Caco-2 (cell line): ENCODE measurements at regions of chr17 and their contacts with region 1.

Region 1: GRCh38 chr17:28227316-28228125 is 91.5 kb upstream of the TMEM97 start:
- DNase-seq: peak; percentile 100
- H3K4me3 ChIP-seq: peak overlapping the region; percentile 88
- H3K4me3 Mint-ChIP-seq: peak overlapping the region; percentile 91
- H3K27ac Mint-ChIP-seq: peak overlapping the region; percentile 95
- H3K4me1 ChIP-seq: peaks cover 32% of the 10 kb centered on the region
- H3K4me1 Mint-ChIP-seq: peaks cover 24% of the 10 kb centered on the region
- H3K27me3 ChIP-seq: no peaks in the 10 kb centered on the region
- H3K27me3 Mint-ChIP-seq: no peaks in the 10 kb centered on the region
- CTCF ChIP-seq: peak; percentile 16 to 45

Region 2: GRCh38 chr17:27848931-27849330 is 378.6 kb before region 1 on chr17:
- CTCF ChIA-PET with region 1: no interaction called
- POLR2A ChIA-PET with region 1: no interaction called
- intact Hi-C with region 1: no loop called
- DNase-seq: no peak
- H3K4me3 ChIP-seq: no peak overlapping the region
- H3K4me3 Mint-ChIP-seq: no peak overlapping the region
- H3K27ac Mint-ChIP-seq: no peak overlapping the region
- H3K4me1 ChIP-seq: peaks cover 28% of the 10 kb centered on the region
- H3K4me1 Mint-ChIP-seq: peaks cover 18% of the 10 kb centered on the region
- H3K27me3 ChIP-seq: no peaks in the 10 kb centered on the region
- H3K27me3 Mint-ChIP-seq: no peaks in the 10 kb centered on the region
- CTCF ChIP-seq: no peak

Region 3: GRCh38 chr17:27892866-27893769 is 334.4 kb before region 1 on chr17 and contains the start of gene LYRM9:
- CTCF ChIA-PET with region 1: interaction called, 4 read pairs
- POLR2A ChIA-PET with region 1: no interaction called
- intact Hi-C with region 1: loop called (anchors 5 kb)
- DNase-seq: peak; percentile 98 to 100
- H3K4me3 ChIP-seq: peak within 1 kb of the TSS; percentile 75
- H3K4me3 Mint-ChIP-seq: peak within 1 kb of the TSS; percentile 70
- H3K27ac Mint-ChIP-seq: peak within 1 kb of the TSS; percentile 28
- H3K4me1 ChIP-seq: peaks cover 39% of the 10 kb centered on the region
- H3K4me1 Mint-ChIP-seq: peaks cover 47% of the 10 kb centered on the region
- H3K27me3 ChIP-seq: no peaks in the 10 kb centered on the region
- H3K27me3 Mint-ChIP-seq: no peaks in the 10 kb centered on the region
- CTCF ChIP-seq: peak; percentile 98 to 99
- total RNA-seq, gene LYRM9: 25.6 and 29.1 TPM in 2 replicates

Region 4: DNA sequence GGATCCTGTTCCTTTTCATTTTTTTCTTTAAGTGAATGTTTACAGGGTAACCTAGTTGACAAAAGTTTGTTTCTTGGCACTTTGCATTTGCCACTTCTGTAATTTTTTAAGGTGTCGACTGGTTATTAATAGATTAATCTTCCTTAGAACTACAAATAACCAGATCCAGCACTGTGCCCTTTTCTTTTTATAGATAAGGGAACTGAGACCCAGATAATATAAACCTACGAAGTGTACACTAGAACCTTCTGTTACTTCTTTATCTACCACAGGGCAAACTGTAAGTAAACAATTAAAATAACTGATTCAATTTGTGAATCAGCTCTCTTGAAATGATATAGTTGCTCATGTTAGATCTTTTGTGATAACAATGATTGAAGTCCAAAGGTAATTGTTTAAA is 129.6 kb before region 1 on chr17:
- CTCF ChIA-PET with region 1: no interaction called
- POLR2A ChIA-PET with region 1: no interaction called
- intact Hi-C with region 1: no loop called
- DNase-seq: no peak
- H3K4me3 ChIP-seq: no peak overlapping the region
- H3K4me3 Mint-ChIP-seq: no peak overlapping the region
- H3K27ac Mint-ChIP-seq: no peak overlapping the region
- H3K4me1 ChIP-seq: peaks cover 16% of the 10 kb centered on the region
- H3K4me1 Mint-ChIP-seq: peaks cover 15% of the 10 kb centered on the region
- H3K27me3 ChIP-seq: no peaks in the 10 kb centered on the region
- H3K27me3 Mint-ChIP-seq: no peaks in the 10 kb centered on the region
- CTCF ChIP-seq: no peak

Region 5: GRCh38 chr17:28211811-28212210 is 15.7 kb before region 1 on chr17:
- CTCF ChIA-PET with region 1: interaction called, 3 read pairs
- POLR2A ChIA-PET with region 1: no interaction called
- intact Hi-C with region 1: loop called (anchors 2 kb)
- DNase-seq: peak in 1 of 2 experiments; percentile 46
- H3K4me3 ChIP-seq: no peak overlapping the region
- H3K4me3 Mint-ChIP-seq: no peak overlapping the region
- H3K27ac Mint-ChIP-seq: no peak overlapping the region
- H3K4me1 ChIP-seq: no peaks in the 10 kb centered on the region
- H3K4me1 Mint-ChIP-seq: no peaks in the 10 kb centered on the region
- H3K27me3 ChIP-seq: no peaks in the 10 kb centered on the region
- H3K27me3 Mint-ChIP-seq: no peaks in the 10 kb centered on the region
- CTCF ChIP-seq: no peak

Region 6: DNA sequence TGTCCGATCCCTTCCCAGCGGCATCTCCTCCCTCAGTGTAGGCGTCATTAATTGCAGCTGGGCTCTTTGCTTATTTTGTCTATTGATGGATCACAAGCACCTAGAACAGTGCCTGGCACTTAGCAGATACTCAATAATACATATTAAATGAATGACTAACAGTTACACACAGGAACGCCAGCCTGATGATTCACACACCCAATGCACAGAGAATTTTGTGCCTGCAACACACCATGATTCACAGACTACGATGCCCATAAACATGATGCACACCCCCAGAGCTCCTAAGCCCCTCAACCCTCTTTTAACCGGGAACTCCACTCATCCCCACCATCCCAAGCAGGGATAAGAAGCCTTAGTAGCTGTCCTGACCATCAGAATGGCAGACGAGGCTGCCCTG is 24.9 kb after region 1 on chr17:
- CTCF ChIA-PET with region 1: interaction called, 10 read pairs
- POLR2A ChIA-PET with region 1: interaction called, 3 read pairs
- intact Hi-C with region 1: no loop called
- DNase-seq: no peak
- H3K4me3 ChIP-seq: no peak overlapping the region
- H3K4me3 Mint-ChIP-seq: no peak overlapping the region
- H3K27ac Mint-ChIP-seq: no peak overlapping the region
- H3K4me1 ChIP-seq: no peaks in the 10 kb centered on the region
- H3K4me1 Mint-ChIP-seq: peaks cover 7% of the 10 kb centered on the region
- H3K27me3 ChIP-seq: no peaks in the 10 kb centered on the region
- H3K27me3 Mint-ChIP-seq: peaks cover 3% of the 10 kb centered on the region
- CTCF ChIP-seq: no peak

Region 7: DNA sequence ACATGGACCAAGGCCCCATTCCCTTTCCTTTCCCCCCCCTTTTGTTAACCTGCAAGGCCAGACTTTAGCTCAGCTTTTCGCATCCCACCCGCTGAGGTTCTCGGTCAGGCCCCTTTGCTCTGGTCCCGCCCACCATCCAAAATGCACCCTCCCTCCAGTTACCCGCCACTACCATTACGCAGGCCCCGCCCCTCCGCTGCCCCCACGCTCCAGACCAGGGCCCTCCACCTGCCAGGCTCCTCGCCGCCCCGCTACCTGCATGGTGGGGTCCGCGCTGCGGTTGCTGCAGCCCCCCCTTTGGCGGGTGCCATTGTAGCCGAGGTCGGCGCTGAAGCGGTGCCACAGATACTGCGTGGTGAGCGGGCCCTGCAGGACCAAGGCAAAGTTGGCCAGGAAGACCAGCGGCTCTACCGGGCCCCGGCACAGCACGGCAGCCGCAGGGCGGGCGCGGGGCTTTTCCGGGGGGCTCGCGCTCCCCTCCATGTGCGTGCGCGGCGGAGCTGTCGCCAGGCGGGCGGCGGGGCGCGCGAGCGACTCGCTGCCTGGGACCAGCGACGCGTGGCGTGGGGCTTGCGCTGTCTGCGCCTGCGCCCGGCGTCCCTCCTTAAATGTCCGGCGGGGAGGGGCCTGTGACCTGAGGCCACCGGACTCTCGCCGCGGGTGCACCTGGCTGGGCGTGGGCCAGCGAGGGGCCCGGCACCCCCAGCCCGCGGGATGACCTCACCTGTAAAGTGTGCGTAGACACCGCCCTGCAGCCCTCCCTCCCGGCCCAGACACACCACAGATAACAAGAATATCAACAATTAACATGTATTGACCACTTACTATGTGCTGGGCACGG is 178.3 kb after region 1 on chr17 and contains the start of gene SLC46A1:
- CTCF ChIA-PET with region 1: no interaction called
- POLR2A ChIA-PET with region 1: no interaction called
- intact Hi-C with region 1: loop called (anchors 10 kb)
- DNase-seq: peak; percentile 96 to 97
- H3K4me3 ChIP-seq: peak within 1 kb of the TSS; percentile 78
- H3K4me3 Mint-ChIP-seq: peak within 1 kb of the TSS; percentile 90
- H3K27ac Mint-ChIP-seq: peak within 1 kb of the TSS; percentile 72
- H3K4me1 ChIP-seq: peaks cover 56% of the 10 kb centered on the region
- H3K4me1 Mint-ChIP-seq: peaks cover 31% of the 10 kb centered on the region
- H3K27me3 ChIP-seq: no peaks in the 10 kb centered on the region
- H3K27me3 Mint-ChIP-seq: no peaks in the 10 kb centered on the region
- CTCF ChIP-seq: no peak
- total RNA-seq, gene SLC46A1: 114 and 128 TPM in 2 replicates